Posterior vena cava (tissue), 2 donors: ENCODE measurements at regions of chr9 and their contacts with region 1.

Region 1: GRCh38 chr9:107732781-107733522 is 243.4 kb upstream of the KLF4 start:
- DNase-seq: no peak

Region 2: GRCh38 chr9:107637421-107638420 is 95.2 kb before region 1 on chr9:
- intact Hi-C with region 1: loop called in 1 of 2 experiments (anchors 5 kb)
- DNase-seq: peak; percentile 96

Region 3: DNA sequence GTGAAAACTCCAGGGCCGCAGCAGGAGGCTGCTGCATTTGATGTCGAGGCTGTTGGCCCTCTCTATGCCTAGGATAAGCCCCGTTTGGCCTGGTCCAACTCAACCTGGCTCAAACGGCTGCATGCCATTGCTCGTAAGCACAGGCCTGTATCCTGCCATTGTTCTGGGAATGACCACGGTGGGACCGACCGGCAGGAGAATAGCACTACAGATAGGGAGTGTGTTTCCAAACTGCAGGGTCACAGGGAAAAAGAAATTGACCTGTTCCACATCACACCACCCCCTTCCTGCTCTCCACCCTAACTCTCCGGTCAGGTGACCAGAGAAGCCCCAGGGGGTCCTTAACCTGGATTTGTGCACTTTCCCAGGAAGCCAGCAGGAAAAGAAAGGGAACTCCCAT is 35.3 kb after region 1 on chr9:
- intact Hi-C with region 1: no loop called
- DNase-seq: no peak